Right lobe of liver (tissue), 6 donors: ENCODE measurements at regions of chr4 and their contacts with region 1.

Region 1: GRCh38 chr4:125741825-125742452 is 427.2 kb downstream of the FAT4 start:
- DNase-seq: no peak
- ATAC-seq: peak; percentile 72 to 87 (median 80)
- H3K4me3 ChIP-seq: no peak overlapping the region
- H3K27ac ChIP-seq: no peak overlapping the region
- H3K4me1 ChIP-seq: no peaks in the 10 kb centered on the region
- H3K27me3 ChIP-seq: no peaks in the 10 kb centered on the region
- CTCF ChIP-seq: peak; percentile 52 to 81 (median 59)
- POLR2A ChIP-seq: no peak

Region 2: GRCh38 chr4:125314676-125315575 is 427.0 kb before region 1 on chr4 and contains the start of gene FAT4:
- intact Hi-C with region 1: loop called in 1 of 2 experiments (anchors 10 kb)
- DNase-seq: peak; percentile 98 to 99 (median 99)
- ATAC-seq: peak; percentile 84 to 95 (median 88)
- H3K4me3 ChIP-seq: peak within 1 kb of the TSS; percentile 70 to 76 (median 70)
- H3K27ac ChIP-seq: peak within 1 kb of the TSS; percentile 91 to 93 (median 92)
- H3K4me1 ChIP-seq: peaks cover 0 to 20% (median 0%) of the 10 kb centered on the region in 4 donors
- H3K27me3 ChIP-seq: no peaks in the 10 kb centered on the region
- CTCF ChIP-seq: peak in 3 of 4 donors; percentile 19 to 32 (median 23)
- POLR2A ChIP-seq: peak; percentile 92
- total RNA-seq, gene FAT4: 2.8 to 4.6 (median 3.6) TPM

Region 3: GRCh38 chr4:125420526-125420925 is 321.4 kb before region 1 on chr4:
- intact Hi-C with region 1: no loop called
- DNase-seq: no peak
- ATAC-seq: no peak
- H3K4me3 ChIP-seq: no peak overlapping the region
- H3K27ac ChIP-seq: no peak overlapping the region
- H3K4me1 ChIP-seq: no peaks in the 10 kb centered on the region
- H3K27me3 ChIP-seq: no peaks in the 10 kb centered on the region
- CTCF ChIP-seq: no peak
- POLR2A ChIP-seq: no peak

Region 4: DNA sequence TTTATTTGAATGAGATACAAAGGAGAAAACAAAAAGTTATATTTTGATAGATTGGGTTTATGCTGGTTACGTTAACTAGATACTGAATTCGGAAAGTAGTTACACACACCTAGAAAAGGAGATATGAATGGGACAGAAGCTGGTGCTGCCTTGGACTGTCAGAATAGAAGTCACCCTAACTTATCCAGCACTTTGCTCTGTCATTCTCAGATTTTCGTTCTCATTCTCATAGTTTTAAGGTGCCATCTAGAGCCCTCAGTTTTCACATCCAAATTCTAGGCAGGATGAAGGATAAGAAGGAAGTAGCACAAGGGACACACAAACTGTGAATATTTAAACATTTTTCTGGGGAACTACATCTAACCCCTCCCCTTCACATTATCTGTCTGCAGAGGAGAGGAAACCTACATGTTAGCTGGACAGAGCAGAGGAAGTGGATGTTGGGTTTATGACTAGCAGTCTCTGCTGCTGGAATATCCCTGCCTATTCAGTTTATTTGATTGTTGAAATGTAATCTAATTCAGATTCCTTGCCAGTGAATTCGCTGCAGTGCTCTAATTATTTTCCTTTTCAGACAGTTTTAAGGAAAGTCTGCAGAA is 94.8 kb after region 1 on chr4:
- intact Hi-C with region 1: no loop called
- DNase-seq: no peak
- ATAC-seq: no peak
- H3K4me3 ChIP-seq: no peak overlapping the region
- H3K27ac ChIP-seq: no peak overlapping the region
- H3K4me1 ChIP-seq: no peaks in the 10 kb centered on the region
- H3K27me3 ChIP-seq: no peaks in the 10 kb centered on the region
- CTCF ChIP-seq: no peak
- POLR2A ChIP-seq: no peak

Region 5: GRCh38 chr4:125911481-125911880 is 169.5 kb after region 1 on chr4:
- intact Hi-C with region 1: no loop called
- DNase-seq: no peak
- ATAC-seq: no peak
- H3K4me3 ChIP-seq: no peak overlapping the region
- H3K27ac ChIP-seq: no peak overlapping the region
- H3K4me1 ChIP-seq: no peaks in the 10 kb centered on the region
- H3K27me3 ChIP-seq: no peaks in the 10 kb centered on the region
- CTCF ChIP-seq: no peak
- POLR2A ChIP-seq: no peak